ENCODE measurements at regions of chr12 and their contacts with region 1.

Region 1: DNA sequence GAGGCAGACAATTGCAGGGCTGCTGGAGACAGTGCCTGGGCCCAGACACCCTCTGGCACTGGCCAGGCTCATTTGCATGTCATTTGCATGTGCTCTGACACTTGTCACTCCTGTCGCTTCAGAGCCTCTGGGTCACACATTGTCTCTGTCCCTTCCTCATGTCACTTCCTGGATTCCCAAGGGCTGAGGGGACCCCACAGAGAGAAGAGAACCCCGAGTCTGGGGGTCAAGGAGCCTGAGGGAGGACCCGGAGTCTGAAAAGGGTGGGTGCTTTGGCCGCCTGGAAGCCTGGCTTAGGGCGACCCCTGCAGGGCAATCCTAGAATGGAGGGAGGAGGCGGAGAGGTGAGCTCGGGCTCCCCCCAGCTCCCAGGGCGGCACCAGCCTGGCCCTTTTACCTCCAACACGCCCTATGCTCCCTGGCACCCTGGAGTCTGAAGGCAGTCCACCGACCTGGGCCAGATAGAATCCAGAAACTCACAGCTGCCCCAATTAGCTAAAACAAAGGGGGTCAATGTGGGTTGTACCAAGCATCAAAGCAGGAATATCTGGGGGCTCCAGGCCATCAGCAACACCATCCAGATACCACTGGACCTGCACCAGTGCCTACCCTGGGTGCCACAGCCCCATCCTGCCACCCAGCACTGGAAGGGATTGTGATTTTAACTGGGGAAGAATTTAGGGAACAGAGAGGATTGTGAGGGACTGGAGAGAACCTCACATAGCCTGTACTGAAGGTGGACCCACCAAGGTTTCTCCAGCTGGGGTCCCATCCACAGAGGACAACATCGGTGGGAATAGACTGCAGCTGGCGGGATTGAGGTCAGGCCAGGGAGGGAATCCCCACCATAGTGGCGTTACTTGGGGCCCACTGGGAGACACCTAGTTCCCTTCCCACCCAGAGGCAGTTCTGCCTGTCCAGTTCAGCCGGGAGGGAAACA is 21.8 kb upstream of the KRT78 start:
- DNase-seq: peak; percentile 83 to 86
- ATAC-seq: peak; percentile 33 to 71
- H3K4me3 ChIP-seq: no peak overlapping the region
- H3K27ac ChIP-seq: peak overlapping the region; percentile 94 to 97
- H3K4me1 ChIP-seq: peaks cover 80% of the 10 kb centered on the region
- CTCF ChIP-seq: peak; percentile 96
- EP300 ChIP-seq: no peak
- POLR2A ChIP-seq: no peak
- RAD21 ChIP-seq: peak; percentile 98 to 100

Region 2: GRCh38 chr12:52486166-52487105 is 384.2 kb before region 1 on chr12:
- CTCF ChIA-PET with region 1: no interaction called
- POLR2A ChIA-PET with region 1: no interaction called
- DNase-seq: no peak
- ATAC-seq: no peak
- H3K4me3 ChIP-seq: no peak overlapping the region
- H3K27ac ChIP-seq: no peak overlapping the region
- H3K4me1 ChIP-seq: no peaks in the 10 kb centered on the region
- CTCF ChIP-seq: no peak
- EP300 ChIP-seq: no peak
- POLR2A ChIP-seq: no peak
- RAD21 ChIP-seq: no peak

Region 3: GRCh38 chr12:52860063-52860823 is 10.4 kb before region 1 on chr12:
- CTCF ChIA-PET with region 1: interaction called, 27 read pairs
- POLR2A ChIA-PET with region 1: interaction called, 4 read pairs
- DNase-seq: peak; percentile 52 to 89
- ATAC-seq: peak; percentile 93 to 95
- H3K4me3 ChIP-seq: no peak overlapping the region
- H3K27ac ChIP-seq: peak overlapping the region; percentile 46 to 78; a peak in 5 of 6 replicates
- H3K4me1 ChIP-seq: peaks cover 18% of the 10 kb centered on the region
- CTCF ChIP-seq: no peak
- EP300 ChIP-seq: no peak
- POLR2A ChIP-seq: no peak
- RAD21 ChIP-seq: no peak

Measured in A549 (cell line).